Activated B cell treated with CpG ODN at 0.5 μM for 24 hours (primary cell): ENCODE measurements at regions of chr17 and their contacts with region 1.

Region 1: DNA sequence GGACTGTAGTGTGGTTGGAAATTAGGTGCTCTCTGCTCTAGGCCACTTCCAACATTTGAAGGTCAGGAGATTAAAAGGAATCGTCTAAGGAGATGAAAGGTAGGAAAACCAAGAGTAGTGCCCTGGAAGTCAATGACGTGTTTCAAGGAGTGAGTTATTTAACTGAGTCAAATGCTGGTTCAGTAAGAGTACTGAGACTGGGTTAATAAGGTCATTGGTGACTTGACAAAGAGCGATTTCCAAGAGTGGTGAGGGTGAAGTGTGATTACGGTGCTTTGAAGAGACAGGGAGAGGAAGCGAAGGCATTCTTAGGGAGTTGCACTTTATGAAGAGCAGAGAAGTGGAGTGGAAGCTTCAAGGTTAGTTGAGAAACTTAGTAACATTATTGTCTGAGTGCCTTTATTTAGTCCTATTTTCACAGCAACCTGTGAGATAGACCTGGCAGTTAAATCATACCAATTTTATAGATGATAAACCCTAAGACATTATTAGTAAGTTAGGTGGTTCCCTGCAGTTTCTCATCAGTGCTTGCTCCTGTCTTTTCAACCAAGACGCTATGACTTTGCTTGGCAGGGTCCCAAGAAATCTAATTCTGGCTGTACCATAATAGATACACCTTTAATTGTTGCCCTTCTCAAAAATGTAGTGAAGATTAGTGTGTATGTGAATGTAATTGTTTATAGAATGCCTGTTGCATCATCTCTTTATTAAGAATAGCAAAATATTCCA is 5.9 kb downstream of the ZNF207 start:
- DNase-seq: no peak
- ATAC-seq: no peak
- H3K4me3 Mint-ChIP-seq: no peak overlapping the region
- H3K27ac Mint-ChIP-seq: no peak overlapping the region
- H3K4me1 Mint-ChIP-seq: peaks cover 49% of the 10 kb centered on the region
- H3K27me3 Mint-ChIP-seq: no peaks in the 10 kb centered on the region
- CTCF ChIP-seq: no peak

Region 2: DNA sequence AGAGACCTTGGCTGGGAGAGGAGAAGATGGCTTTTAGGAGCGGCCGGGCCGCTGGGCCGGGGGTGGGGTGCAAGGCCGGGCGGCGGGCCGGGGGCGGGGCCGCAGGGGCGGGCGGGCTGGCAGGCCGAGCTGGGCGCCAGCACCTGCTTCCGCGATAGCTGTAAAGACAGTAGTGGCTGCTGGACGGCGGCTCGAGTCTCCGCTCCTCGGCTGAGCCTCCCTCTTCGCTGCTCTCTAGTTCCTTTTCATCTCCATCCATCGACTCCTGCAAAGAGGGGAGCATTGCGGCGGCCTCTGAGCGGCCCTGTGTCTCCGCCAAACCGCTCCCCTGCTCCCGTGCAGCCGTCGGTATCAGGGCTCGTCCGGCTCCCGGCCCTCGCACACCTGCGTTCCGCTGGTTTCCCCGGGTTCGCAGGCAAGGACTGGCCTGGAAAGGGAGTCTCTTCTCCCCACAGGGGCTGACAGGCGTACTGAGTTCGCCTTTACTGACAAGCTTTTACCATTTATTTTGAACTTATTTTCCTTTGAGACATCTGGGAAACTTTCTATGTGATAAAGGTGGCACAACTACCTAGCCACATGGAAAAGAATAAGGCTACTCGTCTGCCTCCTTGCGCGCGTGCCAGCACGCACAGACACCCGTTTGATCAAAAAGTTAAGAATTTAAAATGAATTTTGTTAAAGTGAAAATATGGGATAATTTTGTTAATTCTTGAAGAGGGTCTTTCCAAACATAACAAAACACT is 13.8 kb before region 1 on chr17 and contains the start of gene C17orf75:
- CTCF ChIA-PET with region 1: no interaction called
- POLR2A ChIA-PET with region 1: interaction called, 31 read pairs
- intact Hi-C with region 1: no loop called
- DNase-seq: peak; percentile 72
- ATAC-seq: peak; percentile 87
- H3K4me3 Mint-ChIP-seq: peak within 1 kb of the TSS; percentile 93
- H3K27ac Mint-ChIP-seq: peak within 1 kb of the TSS; percentile 96
- H3K4me1 Mint-ChIP-seq: peaks cover 24% of the 10 kb centered on the region
- H3K27me3 Mint-ChIP-seq: no peaks in the 10 kb centered on the region
- CTCF ChIP-seq: no peak
- total RNA-seq, gene C17orf75: 18.1 and 23.0 TPM in 2 replicates